Activated CD4-positive, alpha-beta T cell treated with anti-CD3 and anti-CD28 coated beads for 36 hours (primary cell): ENCODE measurements at regions of chr12 and their contacts with region 1.

Region 1: DNA sequence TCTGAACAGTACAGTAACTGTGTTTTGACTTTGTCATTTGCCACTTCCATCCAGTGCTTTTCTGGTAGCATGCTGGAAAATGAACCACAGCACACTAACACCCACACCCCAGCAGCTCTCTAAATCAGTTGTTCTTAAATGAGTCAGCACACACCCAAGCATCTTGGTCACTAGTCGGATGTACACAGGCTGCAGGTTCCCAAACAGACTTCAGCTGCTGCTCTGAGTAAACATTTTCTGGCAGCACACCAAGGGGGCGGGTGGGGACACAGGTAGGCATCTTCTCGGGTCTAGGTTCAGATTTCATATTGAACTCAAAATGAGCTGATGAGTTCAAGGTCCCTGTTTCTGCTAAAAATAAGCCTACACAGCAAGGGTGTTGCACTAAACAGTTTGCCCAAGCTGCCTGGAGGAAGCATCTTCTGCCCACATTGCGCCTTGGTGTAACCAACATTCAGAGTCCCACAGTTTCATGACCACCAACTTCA is 39.8 kb downstream of the IFNG start:
- DNase-seq: peak; percentile 84
- ATAC-seq: peak; percentile 82
- H3K4me3 Mint-ChIP-seq: no peak overlapping the region
- H3K27ac Mint-ChIP-seq: peak overlapping the region; percentile 48
- H3K4me1 Mint-ChIP-seq: peaks cover 20% of the 10 kb centered on the region
- H3K27me3 Mint-ChIP-seq: peaks cover 3% of the 10 kb centered on the region

Region 2: DNA sequence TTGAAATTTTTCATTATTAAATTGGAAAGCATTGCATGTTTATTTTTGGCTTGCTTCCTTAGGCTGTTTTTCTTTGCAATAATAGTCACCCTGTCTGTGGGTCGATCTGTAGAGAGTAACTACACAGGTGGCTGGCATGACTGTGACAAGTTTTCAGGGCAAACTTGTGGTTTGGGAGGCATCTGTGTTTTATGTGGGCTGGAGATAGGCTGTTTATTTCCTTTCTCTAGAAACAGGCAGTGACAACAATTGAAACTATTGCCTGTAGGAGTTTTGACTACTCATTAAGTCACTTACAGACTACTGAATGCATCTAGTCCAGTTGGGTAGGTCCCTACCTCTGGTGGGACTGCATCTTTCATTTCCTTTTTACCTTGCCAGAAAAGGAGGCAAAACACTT is 315.6 kb before region 1 on chr12:
- CTCF ChIA-PET with region 1: no interaction called
- POLR2A ChIA-PET with region 1: no interaction called
- intact Hi-C with region 1: loop called in 1 of 2 experiments (anchors 10 kb)
- DNase-seq: peak; percentile 76
- ATAC-seq: peak; percentile 98
- H3K4me3 Mint-ChIP-seq: no peak overlapping the region
- H3K27ac Mint-ChIP-seq: no peak overlapping the region
- H3K4me1 Mint-ChIP-seq: peaks cover 27% of the 10 kb centered on the region
- H3K27me3 Mint-ChIP-seq: peaks cover 4% of the 10 kb centered on the region

Region 3: DNA sequence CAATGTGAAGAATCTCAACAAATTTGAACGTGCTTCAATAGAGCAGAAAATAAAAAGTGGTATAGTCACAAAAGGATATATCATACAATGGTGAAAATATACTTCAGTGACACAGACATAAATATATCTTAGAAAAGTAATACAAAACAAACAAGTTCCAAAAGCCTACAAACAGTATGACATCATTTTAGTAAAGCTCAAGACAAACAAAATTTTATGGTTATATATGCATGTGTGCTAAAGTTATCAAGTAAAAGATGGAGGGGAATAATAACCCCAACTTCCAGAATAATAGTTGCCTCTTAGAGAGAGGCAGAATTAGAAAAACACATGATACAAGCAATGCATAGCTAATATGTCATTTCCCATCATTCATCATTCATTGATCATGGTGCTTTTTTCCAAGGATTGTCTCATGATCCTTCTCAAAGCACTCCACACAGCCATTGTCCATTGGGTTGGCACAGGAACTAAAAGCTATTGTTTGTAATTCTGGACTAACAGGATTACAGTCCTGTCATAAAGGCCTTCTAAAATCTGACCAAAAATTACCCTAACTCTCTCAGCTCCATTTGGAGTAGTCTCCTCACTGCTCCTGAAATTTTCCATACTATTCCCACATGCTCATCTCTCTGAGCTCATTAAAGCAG is 71.0 kb before region 1 on chr12:
- CTCF ChIA-PET with region 1: no interaction called
- POLR2A ChIA-PET with region 1: no interaction called
- intact Hi-C with region 1: no loop called
- DNase-seq: no peak
- ATAC-seq: no peak
- H3K4me3 Mint-ChIP-seq: no peak overlapping the region
- H3K27ac Mint-ChIP-seq: no peak overlapping the region
- H3K4me1 Mint-ChIP-seq: no peaks in the 10 kb centered on the region
- H3K27me3 Mint-ChIP-seq: no peaks in the 10 kb centered on the region

Region 4: GRCh38 chr12:68137335-68137830 is 17.6 kb after region 1 on chr12:
- CTCF ChIA-PET with region 1: interaction called, 3 read pairs
- POLR2A ChIA-PET with region 1: interaction called, 4 read pairs
- intact Hi-C with region 1: loop called (anchors 1 kb)
- DNase-seq: no peak
- ATAC-seq: peak; percentile 67
- H3K4me3 Mint-ChIP-seq: peak overlapping the region; percentile 13
- H3K27ac Mint-ChIP-seq: peak overlapping the region; percentile 74
- H3K4me1 Mint-ChIP-seq: peaks cover 48% of the 10 kb centered on the region
- H3K27me3 Mint-ChIP-seq: no peaks in the 10 kb centered on the region

Region 5: DNA sequence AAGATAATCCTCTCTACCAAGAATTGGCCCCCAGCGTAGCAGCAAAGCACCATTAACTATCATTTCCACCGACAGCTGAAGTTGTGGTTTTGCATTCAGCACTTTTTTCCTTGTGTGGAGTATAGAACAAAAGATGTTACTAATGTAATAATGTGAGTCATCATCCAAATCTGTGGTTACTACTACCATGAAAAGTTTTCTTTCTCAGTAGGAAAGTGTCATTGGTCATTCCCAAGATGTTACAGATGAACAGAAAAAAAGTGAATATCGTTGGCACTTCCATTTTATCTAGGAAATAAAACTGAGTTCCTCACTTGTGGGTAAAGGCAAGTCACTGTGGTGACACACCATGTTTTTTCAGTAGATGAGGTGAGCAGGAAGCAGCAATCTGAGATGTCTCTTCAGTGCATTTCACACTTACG is 70.1 kb after region 1 on chr12:
- CTCF ChIA-PET with region 1: interaction called, 5 read pairs
- POLR2A ChIA-PET with region 1: no interaction called
- intact Hi-C with region 1: loop called in 1 of 2 experiments (anchors 1 kb)
- DNase-seq: peak; percentile 61
- ATAC-seq: peak; percentile 89
- H3K4me3 Mint-ChIP-seq: no peak overlapping the region
- H3K27ac Mint-ChIP-seq: peak overlapping the region; percentile 24
- H3K4me1 Mint-ChIP-seq: peaks cover 11% of the 10 kb centered on the region
- H3K27me3 Mint-ChIP-seq: peaks cover 13% of the 10 kb centered on the region

Region 6: DNA sequence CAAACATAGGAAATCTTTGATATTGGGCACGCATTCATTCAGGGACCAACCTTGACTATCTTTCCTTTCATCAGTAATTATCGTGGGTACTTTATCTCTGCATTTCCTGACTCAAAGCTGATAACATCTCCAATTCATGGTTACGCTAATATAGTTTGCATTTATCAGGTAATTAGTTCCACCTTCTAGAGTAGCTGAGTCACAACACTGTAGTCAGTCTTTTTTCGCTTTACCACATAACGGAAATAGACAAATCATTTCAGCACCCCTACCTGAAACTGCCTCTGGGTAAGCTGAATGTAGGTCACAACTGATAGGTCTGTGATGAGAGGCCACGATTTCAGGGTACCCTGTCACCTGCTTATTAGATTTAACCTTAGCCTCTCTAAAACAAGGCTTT is 170.4 kb after region 1 on chr12:
- CTCF ChIA-PET with region 1: no interaction called
- POLR2A ChIA-PET with region 1: no interaction called
- intact Hi-C with region 1: loop called (anchors 1 to 5 kb)
- DNase-seq: peak; percentile 49
- ATAC-seq: peak; percentile 91
- H3K4me3 Mint-ChIP-seq: no peak overlapping the region
- H3K27ac Mint-ChIP-seq: no peak overlapping the region
- H3K4me1 Mint-ChIP-seq: peaks cover 39% of the 10 kb centered on the region
- H3K27me3 Mint-ChIP-seq: peaks cover 13% of the 10 kb centered on the region

Region 7: DNA sequence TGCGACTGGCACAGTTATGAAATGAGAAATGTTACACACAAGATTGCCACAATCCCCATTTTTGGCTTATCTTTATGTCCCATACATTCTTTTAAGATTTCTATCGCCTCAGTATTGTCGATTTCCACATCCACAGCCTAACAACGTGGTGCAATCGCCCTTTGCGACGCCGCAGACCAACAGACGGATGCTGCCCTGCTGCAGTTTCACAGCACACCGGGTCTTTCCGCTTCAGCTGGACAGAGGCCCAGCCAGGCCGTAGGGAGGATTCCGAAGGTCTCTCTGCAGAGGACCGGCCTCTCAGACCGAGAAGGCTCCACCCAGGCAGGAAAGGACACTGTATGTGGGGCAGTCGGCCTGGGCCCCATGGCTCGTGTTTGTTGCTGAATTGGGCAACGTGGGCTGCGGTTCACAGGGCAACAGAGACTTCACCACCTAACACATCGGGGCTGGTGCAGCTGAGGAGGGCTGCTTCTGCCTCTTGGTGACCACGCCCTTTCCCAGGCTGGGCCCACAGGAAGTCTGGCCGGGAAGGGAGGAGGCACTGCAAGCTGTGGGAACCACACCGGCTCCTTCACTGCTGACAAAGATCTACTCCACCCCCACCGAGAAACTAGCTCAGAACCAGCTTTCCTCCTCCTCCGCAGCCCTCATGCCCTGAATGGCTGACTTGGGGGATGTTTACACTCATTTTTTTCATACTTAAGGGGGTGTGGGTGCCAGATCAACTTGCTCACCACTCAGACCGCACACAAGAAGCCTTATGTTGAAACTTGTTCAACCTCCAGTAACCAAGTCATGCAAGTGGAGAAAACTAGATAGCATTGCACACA is 245.3 kb after region 1 on chr12:
- CTCF ChIA-PET with region 1: no interaction called
- POLR2A ChIA-PET with region 1: no interaction called
- intact Hi-C with region 1: no loop called
- DNase-seq: peak; percentile 91
- ATAC-seq: peak; percentile 92
- H3K4me3 Mint-ChIP-seq: peak overlapping the region; percentile 74
- H3K27ac Mint-ChIP-seq: peak overlapping the region; percentile 96
- H3K4me1 Mint-ChIP-seq: peaks cover 64% of the 10 kb centered on the region
- H3K27me3 Mint-ChIP-seq: no peaks in the 10 kb centered on the region

Region 8: DNA sequence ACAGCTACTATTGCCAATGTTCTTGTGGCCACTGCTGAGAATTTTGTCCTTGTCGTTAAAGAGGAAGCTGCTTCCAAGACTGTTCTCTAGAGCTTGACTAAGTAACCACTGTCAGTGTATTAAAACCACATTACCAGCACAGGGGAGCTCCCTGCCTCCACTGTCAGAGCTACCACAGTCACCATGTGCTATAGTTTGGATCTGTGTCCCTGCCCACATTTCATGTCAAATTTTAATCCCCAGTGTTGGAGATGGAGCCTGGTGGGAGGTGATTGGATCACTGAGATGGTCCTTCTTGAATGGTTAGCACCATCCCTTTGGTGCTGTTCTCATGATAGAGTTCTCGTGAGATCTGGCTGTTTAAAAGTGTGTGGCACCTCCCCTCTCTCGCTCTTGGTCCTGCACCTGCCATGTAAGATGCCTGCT is 467.7 kb after region 1 on chr12:
- CTCF ChIA-PET with region 1: no interaction called
- POLR2A ChIA-PET with region 1: no interaction called
- intact Hi-C with region 1: no loop called
- DNase-seq: peak; percentile 69
- ATAC-seq: peak; percentile 90
- H3K4me3 Mint-ChIP-seq: peak overlapping the region; percentile 16
- H3K27ac Mint-ChIP-seq: peak overlapping the region; percentile 52
- H3K4me1 Mint-ChIP-seq: peaks cover 51% of the 10 kb centered on the region
- H3K27me3 Mint-ChIP-seq: no peaks in the 10 kb centered on the region